ENCODE measurements at regions of chr17 and their contacts with region 1.

Region 1: DNA sequence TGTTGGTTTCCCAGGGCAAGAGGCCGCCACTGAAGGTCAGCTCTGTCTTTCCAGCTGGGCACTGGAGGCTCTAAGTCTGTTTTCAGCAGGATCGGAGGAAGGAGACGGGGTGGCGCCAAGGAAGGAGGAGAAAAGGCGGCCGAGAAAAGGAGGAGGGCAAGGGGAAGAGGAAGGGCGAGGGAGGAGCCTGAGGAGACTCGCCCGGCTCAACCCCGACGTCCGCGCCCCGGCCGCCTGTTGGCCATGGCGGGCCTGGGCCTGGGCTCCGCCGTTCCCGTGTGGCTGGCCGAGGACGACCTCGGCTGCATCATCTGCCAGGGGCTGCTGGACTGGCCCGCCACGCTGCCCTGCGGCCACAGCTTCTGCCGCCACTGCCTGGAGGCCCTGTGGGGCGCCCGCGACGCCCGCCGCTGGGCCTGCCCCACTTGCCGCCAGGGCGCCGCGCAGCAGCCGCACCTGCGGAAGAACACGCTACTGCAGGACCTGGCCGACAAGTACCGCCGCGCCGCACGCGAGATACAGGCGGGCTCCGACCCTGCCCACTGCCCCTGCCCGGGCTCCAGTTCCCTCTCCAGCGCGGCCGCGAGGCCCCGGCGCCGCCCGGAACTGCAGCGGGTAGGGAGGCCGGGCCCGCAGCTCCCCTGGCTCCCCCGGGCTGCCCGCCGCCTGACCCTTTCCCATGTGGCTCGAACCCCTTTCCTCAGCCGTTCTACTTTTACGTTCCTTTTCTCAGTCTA is at the start of gene RNF135:
- DNase-seq: peak; percentile 84 to 91
- ATAC-seq: peak; percentile 96 to 97 (median 96)
- H3K4me3 ChIP-seq: peak within 1 kb of the TSS; percentile 56 to 92 (median 71)
- H3K27ac ChIP-seq: peak within 1 kb of the TSS; percentile 80 to 99 (median 94)
- H3K4me1 ChIP-seq: peaks cover 0 to 49% (median 7%) of the 10 kb centered on the region in 9 donors
- H3K27me3 ChIP-seq: no peaks in the 10 kb centered on the region
- CTCF ChIP-seq: peak in 4 of 9 donors; percentile 41 to 58 (median 45)
- total RNA-seq, gene RNF135: 2.3 to 7.5 (median 4.5) TPM

Region 2: GRCh38 chr17:30906101-30906911 is 64.7 kb before region 1 on chr17 and contains the start of gene TEFM:
- intact Hi-C with region 1: loop called in 5 of 10 experiments (anchors 5 kb)
- DNase-seq: peak; percentile 89 to 90
- ATAC-seq: peak; percentile 98 to 99 (median 99)
- H3K4me3 ChIP-seq: peak within 1 kb of the TSS; percentile 63 to 98 (median 78)
- H3K27ac ChIP-seq: peak within 1 kb of the TSS; percentile 86 to 96 (median 92)
- H3K4me1 ChIP-seq: peaks cover 0 to 24% (median 20%) of the 10 kb centered on the region in 9 donors
- H3K27me3 ChIP-seq: no peaks in the 10 kb centered on the region
- CTCF ChIP-seq: no peak
- total RNA-seq, gene TEFM: 9.3 to 15.5 (median 13.8) TPM

Region 3: GRCh38 chr17:31008374-31009041 is 37.5 kb after region 1 on chr17:
- intact Hi-C with region 1: loop called in 1 of 10 experiments (anchors 5 kb)
- DNase-seq: peak; percentile 42 to 70
- ATAC-seq: peak; percentile 71 to 90 (median 84)
- H3K4me3 ChIP-seq: peak overlapping the region; percentile 61 to 86 (median 73)
- H3K27ac ChIP-seq: peak overlapping the region in 9 of 10 donors; percentile 73 to 90 (median 79)
- H3K4me1 ChIP-seq: peaks cover 0 to 20% (median 0%) of the 10 kb centered on the region in 9 donors
- H3K27me3 ChIP-seq: no peaks in the 10 kb centered on the region
- CTCF ChIP-seq: no peak

Region 4: DNA sequence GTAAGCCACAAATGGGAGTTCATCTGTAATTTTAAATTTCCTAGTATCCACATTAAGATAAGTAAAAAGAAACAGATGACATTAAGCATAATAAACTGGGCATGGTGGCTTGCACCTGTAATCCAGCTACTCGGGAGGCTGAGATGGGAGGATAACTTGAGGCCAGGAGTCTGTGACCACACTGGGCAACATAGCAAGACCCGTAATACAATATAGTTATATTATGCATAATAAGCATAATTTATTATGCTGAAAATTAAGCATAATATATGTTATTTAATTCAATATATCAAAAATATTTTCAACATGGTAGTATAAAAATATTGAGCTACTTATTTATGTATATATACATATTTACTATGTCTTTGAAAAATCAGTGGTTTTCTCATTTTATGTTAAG is 48.0 kb after region 1 on chr17:
- intact Hi-C with region 1: no loop called
- DNase-seq: no peak
- ATAC-seq: no peak
- H3K4me3 ChIP-seq: no peak overlapping the region
- H3K27ac ChIP-seq: no peak overlapping the region
- H3K4me1 ChIP-seq: peaks cover 0 to 14% (median 0%) of the 10 kb centered on the region in 9 donors
- H3K27me3 ChIP-seq: no peaks in the 10 kb centered on the region
- CTCF ChIP-seq: no peak

Measured in heart right ventricle (tissue), 16 donors.